ENCODE measurements at regions of chr12 and their contacts with region 1.

Region 1: GRCh38 chr12:49567611-49568441 is at the start of gene MCRS1:
- DNase-seq: peak; percentile 92
- ATAC-seq: peak; percentile 87
- H3K4me3 ChIP-seq: peak within 1 kb of the TSS; percentile 80 to 98 (median 85)
- H3K27ac ChIP-seq: peak within 1 kb of the TSS; percentile 81
- H3K4me1 ChIP-seq: peaks cover 34% of the 10 kb centered on the region
- H3K27me3 ChIP-seq: no peaks in the 10 kb centered on the region; a peak in 1 of 5 replicates
- CTCF ChIP-seq: 0 out of 2 replicates have a peak, but pooled peaks have one; percentile 10
- EP300 ChIP-seq: no peak
- POLR2A ChIP-seq: peak; percentile 70 to 96
- RAD21 ChIP-seq: no peak
- total RNA-seq, gene MCRS1: 66.3 and 76.8 TPM in 2 replicates

Region 2: DNA sequence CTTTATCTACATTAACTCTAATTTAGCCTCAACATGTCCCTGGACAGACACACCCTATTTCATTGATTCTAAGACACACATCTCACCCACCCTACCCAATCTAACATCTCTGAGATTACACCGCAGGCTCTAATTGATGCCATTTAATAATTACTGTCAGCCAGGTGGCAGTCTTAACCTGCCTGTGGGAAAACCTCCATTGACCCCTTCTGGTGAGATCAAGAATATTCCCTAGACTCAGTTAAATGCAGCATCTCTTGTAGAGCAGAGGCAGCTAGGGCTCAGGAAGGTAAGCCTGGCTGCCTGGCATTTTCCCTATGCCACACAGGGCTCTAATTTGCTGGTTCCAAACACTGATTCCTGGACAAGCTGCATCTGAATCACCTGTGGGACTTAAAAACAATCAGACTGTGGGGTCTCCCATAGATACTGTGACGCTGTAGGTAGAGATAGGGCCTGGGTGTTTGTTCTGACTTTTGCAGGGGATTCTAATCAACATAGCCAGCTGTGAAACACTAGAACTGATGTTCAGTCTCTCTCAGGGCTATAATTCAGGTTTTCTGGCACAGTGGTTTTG is 14.2 kb before region 1 on chr12:
- CTCF ChIA-PET with region 1: no interaction called
- POLR2A ChIA-PET with region 1: interaction called, 11 read pairs
- in situ Hi-C with region 1: no loop called
- intact Hi-C with region 1: no loop called
- DNase-seq: peak; percentile 58
- ATAC-seq: peak; percentile 58
- H3K4me3 ChIP-seq: no peak overlapping the region
- H3K27ac ChIP-seq: no peak overlapping the region
- H3K4me1 ChIP-seq: peaks cover 47% of the 10 kb centered on the region
- H3K27me3 ChIP-seq: no peaks in the 10 kb centered on the region
- CTCF ChIP-seq: peak; percentile 64
- EP300 ChIP-seq: no peak
- POLR2A ChIP-seq: no peak
- RAD21 ChIP-seq: no peak

Region 3: GRCh38 chr12:49623142-49623904 is 55.5 kb after region 1 on chr12 and contains the start of gene PRPF40B:
- CTCF ChIA-PET with region 1: no interaction called
- POLR2A ChIA-PET with region 1: no interaction called
- in situ Hi-C with region 1: no loop called
- intact Hi-C with region 1: loop called (anchors 5 kb)
- DNase-seq: peak; percentile 77
- ATAC-seq: peak; percentile 90
- H3K4me3 ChIP-seq: peak within 1 kb of the TSS; percentile 56 to 75 (median 59)
- H3K27ac ChIP-seq: peak within 1 kb of the TSS; percentile 67
- H3K4me1 ChIP-seq: peaks cover 29% of the 10 kb centered on the region
- H3K27me3 ChIP-seq: no peaks in the 10 kb centered on the region
- CTCF ChIP-seq: peak; percentile 78
- EP300 ChIP-seq: no peak
- POLR2A ChIP-seq: peak; percentile 90 to 92
- RAD21 ChIP-seq: no peak
- total RNA-seq, gene PRPF40B: 2.6 and 5.0 TPM in 2 replicates

Measured in HepG2 (cell line).